ENCODE measurements at regions of chr15 and their contacts with region 1.

Region 1: GRCh38 chr15:80475572-80475971 is 71.4 kb downstream of the ARNT2 start:
- DNase-seq: no peak
- H3K4me3 ChIP-seq: no peak overlapping the region
- H3K27ac ChIP-seq: no peak overlapping the region
- H3K27me3 ChIP-seq: no peaks in the 10 kb centered on the region
- CTCF ChIP-seq: peak; percentile 28

Region 2: GRCh38 chr15:80489030-80489594 is 13.5 kb after region 1 on chr15:
- CTCF ChIA-PET with region 1: interaction called, 4 read pairs
- POLR2A ChIA-PET with region 1: interaction called, 10 read pairs
- DNase-seq: peak; percentile 65
- H3K4me3 ChIP-seq: no peak overlapping the region
- H3K27ac ChIP-seq: peak overlapping the region; percentile 96
- H3K27me3 ChIP-seq: no peaks in the 10 kb centered on the region
- CTCF ChIP-seq: no peak

Measured in AG04450 (cell line).